PC-9 (cell line): ENCODE measurements at regions of chr1 and their contacts with region 1.

Region 1: GRCh38 chr1:111592389-111593361 is 26.9 kb upstream of the RAP1A start:
- DNase-seq: peak; percentile 87 to 98
- H3K4me3 ChIP-seq: peak overlapping the region; percentile 43
- H3K27ac ChIP-seq: peak overlapping the region; percentile 78
- H3K4me1 ChIP-seq: peaks cover 36% of the 10 kb centered on the region
- H3K27me3 ChIP-seq: no peaks in the 10 kb centered on the region
- CTCF ChIP-seq: no peak

Region 2: DNA sequence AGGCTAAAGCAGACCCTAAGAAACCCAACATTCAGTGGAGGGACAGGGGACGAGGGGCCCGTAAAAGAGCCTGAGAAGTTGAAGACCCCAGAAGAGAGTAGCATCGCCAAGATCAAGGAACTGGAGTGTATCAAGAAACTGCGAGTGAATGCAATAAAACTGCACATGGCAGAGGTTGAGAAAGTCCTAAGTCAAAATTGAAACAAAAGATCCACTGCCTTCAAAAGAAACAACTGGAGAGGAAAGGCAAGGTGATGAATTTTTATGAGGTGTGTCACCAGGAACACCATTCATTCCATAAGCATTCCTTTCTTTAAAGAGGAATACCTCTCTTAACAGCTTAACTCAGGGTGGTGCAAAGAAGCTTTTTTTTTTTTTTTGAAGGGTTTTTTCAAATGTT is 51.0 kb before region 1 on chr1:
- CTCF ChIA-PET with region 1: no interaction called
- POLR2A ChIA-PET with region 1: no interaction called
- intact Hi-C with region 1: loop called (anchors 5 kb)
- DNase-seq: peak; percentile 9 to 88
- H3K4me3 ChIP-seq: 0 out of 2 replicates have a peak overlapping the region, but pooled peaks have one; percentile 8
- H3K27ac ChIP-seq: peak overlapping the region; percentile 19; the same call in 1 of the 2 replicates
- H3K4me1 ChIP-seq: peaks cover 29% of the 10 kb centered on the region
- H3K27me3 ChIP-seq: no peaks in the 10 kb centered on the region
- CTCF ChIP-seq: no peak

Region 3: GRCh38 chr1:111563619-111564018 is 29.1 kb before region 1 on chr1:
- CTCF ChIA-PET with region 1: interaction called, 13 read pairs
- POLR2A ChIA-PET with region 1: interaction called, 3 read pairs
- intact Hi-C with region 1: no loop called
- DNase-seq: peak; percentile 34 to 72
- H3K4me3 ChIP-seq: no peak overlapping the region
- H3K27ac ChIP-seq: peak overlapping the region; percentile 45
- H3K4me1 ChIP-seq: peaks cover 14% of the 10 kb centered on the region
- H3K27me3 ChIP-seq: no peaks in the 10 kb centered on the region
- CTCF ChIP-seq: no peak

Region 4: DNA sequence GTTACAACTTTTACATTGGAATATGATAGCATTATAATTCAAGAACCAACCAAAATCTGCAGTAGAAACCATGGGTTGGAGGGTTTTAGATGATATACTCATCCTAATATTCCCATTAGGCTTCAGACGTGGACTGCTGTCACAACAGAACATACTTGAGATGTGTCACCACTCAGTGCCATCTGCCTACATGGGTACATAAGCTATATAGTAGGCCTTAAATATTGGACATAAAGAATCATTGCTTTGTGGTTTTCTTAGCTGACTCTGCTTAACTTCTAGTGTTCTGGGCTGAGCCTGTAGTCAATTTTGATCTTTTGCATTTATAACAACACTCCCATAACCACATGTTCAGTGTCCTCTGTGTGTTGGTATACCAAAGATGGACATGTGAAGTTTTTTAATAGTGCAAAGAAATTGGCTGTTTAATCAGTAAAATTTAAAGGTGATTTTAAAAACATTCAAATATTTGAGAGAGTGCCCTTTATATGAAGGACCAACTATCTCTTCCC is 41.1 kb after region 1 on chr1:
- CTCF ChIA-PET with region 1: no interaction called
- POLR2A ChIA-PET with region 1: no interaction called
- intact Hi-C with region 1: no loop called
- DNase-seq: no peak
- H3K4me3 ChIP-seq: no peak overlapping the region
- H3K27ac ChIP-seq: no peak overlapping the region
- H3K4me1 ChIP-seq: no peaks in the 10 kb centered on the region
- H3K27me3 ChIP-seq: no peaks in the 10 kb centered on the region
- CTCF ChIP-seq: no peak

Region 5: DNA sequence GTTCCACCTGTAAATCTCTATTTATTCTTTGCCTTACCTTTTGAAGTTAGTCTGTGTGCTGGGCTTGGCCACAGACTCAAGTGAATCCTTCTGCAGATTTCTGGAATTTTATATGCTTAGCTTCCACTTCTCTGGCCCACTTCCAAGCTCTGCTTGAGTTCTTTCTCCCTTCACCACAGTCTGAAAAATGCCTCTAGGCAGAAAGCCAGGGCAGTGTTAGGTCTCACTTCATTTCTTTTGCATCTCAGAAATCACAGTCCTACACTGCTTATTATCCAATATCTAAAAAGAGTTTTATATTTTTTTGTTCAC is 97.6 kb after region 1 on chr1:
- CTCF ChIA-PET with region 1: no interaction called
- POLR2A ChIA-PET with region 1: no interaction called
- intact Hi-C with region 1: no loop called
- DNase-seq: peak in 1 of 2 experiments; percentile 24
- H3K4me3 ChIP-seq: no peak overlapping the region
- H3K27ac ChIP-seq: 0 out of 2 replicates have a peak overlapping the region, but pooled peaks have one; percentile 1
- H3K4me1 ChIP-seq: no peaks in the 10 kb centered on the region
- H3K27me3 ChIP-seq: no peaks in the 10 kb centered on the region
- CTCF ChIP-seq: no peak

Region 6: GRCh38 chr1:112396653-112397471 is 804.2 kb after region 1 on chr1:
- CTCF ChIA-PET with region 1: no interaction called
- POLR2A ChIA-PET with region 1: no interaction called
- intact Hi-C with region 1: no loop called
- DNase-seq: peak; percentile 8 to 48
- H3K4me3 ChIP-seq: peak overlapping the region; percentile 97
- H3K27ac ChIP-seq: peak overlapping the region; percentile 21
- H3K4me1 ChIP-seq: peaks cover 38% of the 10 kb centered on the region
- H3K27me3 ChIP-seq: no peaks in the 10 kb centered on the region
- CTCF ChIP-seq: no peak